ENCODE measurements at regions of chr15 and their contacts with region 1.

Region 1: DNA sequence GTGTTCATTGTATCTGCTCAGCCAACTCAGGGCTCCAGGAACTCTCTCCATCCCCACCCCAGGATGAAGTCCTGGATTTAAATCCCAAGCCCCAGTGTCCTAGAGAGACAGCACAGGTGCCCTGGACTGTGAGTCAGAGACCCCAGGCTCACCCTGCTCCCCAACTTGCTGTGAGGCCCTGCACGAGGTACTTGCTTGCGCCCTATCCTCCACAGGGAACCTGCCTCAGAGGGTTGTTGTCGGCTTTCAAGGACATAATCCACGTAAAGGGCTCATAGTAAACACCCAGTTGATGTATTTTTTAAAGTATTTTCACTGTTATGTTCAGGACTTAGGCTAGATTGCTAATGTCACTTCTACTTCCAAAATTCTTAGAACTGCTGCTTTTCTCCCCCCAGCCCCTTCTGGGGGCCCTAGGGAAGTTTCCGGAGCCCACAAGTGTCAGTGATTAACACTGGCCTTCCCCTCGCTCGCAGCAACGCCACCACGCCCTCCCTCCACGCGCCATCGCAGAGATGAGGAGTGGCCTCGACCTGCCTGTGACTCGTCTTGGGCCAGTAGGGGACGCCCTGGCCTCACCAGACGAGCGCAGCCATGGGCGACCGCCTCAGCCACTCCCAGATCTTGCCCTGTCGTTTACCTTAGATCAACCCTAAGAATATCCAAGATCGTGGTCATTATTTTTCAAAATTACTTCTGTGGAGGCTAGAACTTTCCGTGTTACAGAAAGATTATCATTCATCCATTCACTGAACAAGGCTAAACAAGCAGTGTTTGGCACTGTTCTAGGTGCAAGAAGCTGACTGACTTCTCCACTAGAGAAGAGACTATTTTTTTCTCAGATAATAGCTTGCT is 6.0 kb upstream of the SRP14 start:
- DNase-seq: peak; percentile 96
- H3K4me3 Mint-ChIP-seq: peak overlapping the region; percentile 45
- H3K27ac Mint-ChIP-seq: peak overlapping the region; percentile 50
- H3K4me1 Mint-ChIP-seq: peaks cover 70% of the 10 kb centered on the region
- H3K27me3 Mint-ChIP-seq: no peaks in the 10 kb centered on the region

Region 2: DNA sequence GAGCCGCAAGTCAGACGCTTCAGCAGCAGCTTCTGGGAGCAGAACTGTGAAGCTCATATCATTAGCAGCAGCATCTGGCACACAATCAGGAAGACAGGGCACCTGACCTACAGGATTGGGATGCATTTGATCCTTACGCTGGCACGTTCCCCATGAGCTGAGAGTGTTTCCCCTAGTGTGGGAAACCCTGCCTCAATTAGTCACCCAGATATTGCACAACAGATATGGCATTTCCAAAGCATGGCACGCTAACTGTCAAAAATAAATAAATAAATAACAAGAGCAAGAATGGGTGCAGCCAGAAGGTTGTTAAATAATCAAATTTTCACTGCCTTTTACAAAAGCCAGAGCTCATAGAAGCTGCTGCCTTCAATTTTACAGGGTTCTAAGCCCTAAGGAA is 653.7 kb before region 1 on chr15:
- CTCF ChIA-PET with region 1: no interaction called
- intact Hi-C with region 1: no loop called
- DNase-seq: no peak
- H3K4me3 Mint-ChIP-seq: no peak overlapping the region
- H3K27ac Mint-ChIP-seq: no peak overlapping the region
- H3K4me1 Mint-ChIP-seq: no peaks in the 10 kb centered on the region
- H3K27me3 Mint-ChIP-seq: peaks cover 8% of the 10 kb centered on the region

Region 3: GRCh38 chr15:40064221-40064894 is 19.4 kb after region 1 on chr15:
- CTCF ChIA-PET with region 1: interaction called, 4 read pairs
- intact Hi-C with region 1: loop called (anchors 1 kb)
- DNase-seq: peak; percentile 58
- H3K4me3 Mint-ChIP-seq: no peak overlapping the region
- H3K27ac Mint-ChIP-seq: peak overlapping the region; percentile 64
- H3K4me1 Mint-ChIP-seq: peaks cover 17% of the 10 kb centered on the region
- H3K27me3 Mint-ChIP-seq: no peaks in the 10 kb centered on the region

Region 4: DNA sequence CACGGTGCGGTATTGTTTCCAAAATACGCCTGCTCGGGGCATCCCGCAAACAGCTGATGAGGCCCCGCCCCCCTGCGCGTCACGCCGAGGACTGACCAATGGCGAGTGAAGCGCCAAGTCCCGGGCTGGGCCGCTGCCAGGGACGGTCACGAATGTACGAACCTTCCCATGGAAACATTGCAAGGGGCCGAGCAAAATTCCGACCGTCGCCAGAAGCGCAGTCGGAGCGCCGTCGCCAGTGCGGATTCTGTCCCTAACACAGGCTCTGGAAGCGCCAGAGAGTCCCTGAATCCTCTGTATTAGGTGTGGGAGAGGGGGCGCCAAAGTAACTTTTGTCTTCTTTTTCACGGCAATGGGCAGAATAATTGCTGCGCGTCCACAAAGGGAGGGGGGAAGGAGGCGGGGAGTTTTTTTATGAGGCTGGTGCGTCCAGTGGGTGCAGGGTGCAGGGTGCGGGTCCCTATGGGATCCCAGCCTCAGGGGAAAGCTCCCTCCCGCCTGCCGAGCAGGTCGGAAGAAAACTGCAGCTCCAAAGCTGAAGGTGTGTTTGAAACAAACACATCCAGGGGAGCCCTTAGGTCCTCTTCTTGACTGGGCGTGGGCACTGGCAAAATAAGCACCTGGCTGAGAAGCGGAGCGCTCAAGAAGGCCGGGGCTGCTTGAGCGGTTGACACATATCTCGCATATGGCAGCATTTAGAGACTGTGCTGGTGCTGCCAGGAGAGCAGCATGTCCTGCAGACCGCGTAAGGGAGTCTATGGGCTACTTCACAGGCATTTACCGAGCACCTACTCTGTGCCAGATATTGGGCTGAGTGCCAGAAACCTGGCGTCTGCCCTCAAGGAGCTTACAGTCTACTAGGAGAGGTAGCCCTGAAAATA is 64.2 kb after region 1 on chr15 and contains the start of gene BMF:
- CTCF ChIA-PET with region 1: interaction called, 181 read pairs
- intact Hi-C with region 1: loop called (anchors 1 kb)
- DNase-seq: peak; percentile 98
- H3K4me3 Mint-ChIP-seq: peak within 1 kb of the TSS; percentile 84
- H3K27ac Mint-ChIP-seq: peak within 1 kb of the TSS; percentile 31
- H3K4me1 Mint-ChIP-seq: peaks cover 40% of the 10 kb centered on the region
- H3K27me3 Mint-ChIP-seq: no peaks in the 10 kb centered on the region
- total RNA-seq, gene BMF: 9.4 to 10.3 TPM

Region 5: DNA sequence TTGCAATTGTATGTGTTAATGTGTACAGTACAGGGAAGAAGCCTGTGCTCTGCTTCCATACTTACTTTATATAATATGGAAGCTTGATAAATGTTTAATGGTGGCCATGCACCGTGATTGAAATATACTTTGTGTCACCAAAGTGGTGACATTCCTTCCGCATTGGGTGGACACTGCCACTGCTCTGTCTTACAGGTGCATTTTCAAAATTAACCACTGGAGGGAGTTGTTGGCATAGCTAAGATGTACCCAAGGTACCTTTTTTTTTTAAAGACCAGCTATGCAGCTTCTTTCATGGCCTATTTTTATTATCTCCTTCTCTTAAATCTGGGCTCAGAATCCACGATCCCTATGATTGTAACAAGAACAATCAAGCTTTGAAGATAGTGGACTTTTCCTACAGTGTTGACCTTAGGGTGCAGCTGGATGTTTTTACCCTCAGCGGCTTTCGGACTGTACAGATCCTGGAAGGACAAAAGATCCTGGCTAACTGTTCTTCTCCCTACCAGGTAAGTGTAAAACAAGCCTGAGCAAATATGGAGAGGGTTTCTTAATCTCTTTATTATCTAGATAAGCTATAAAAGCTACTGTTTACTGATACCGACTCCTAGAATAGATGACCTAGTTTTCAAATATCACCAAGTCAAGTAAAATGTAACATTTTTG is 172.3 kb after region 1 on chr15:
- CTCF ChIA-PET with region 1: interaction called, 23 read pairs
- intact Hi-C with region 1: loop called (anchors 1 kb)
- DNase-seq: peak; percentile 47
- H3K4me3 Mint-ChIP-seq: no peak overlapping the region
- H3K27ac Mint-ChIP-seq: no peak overlapping the region
- H3K4me1 Mint-ChIP-seq: no peaks in the 10 kb centered on the region
- H3K27me3 Mint-ChIP-seq: no peaks in the 10 kb centered on the region

Region 6: DNA sequence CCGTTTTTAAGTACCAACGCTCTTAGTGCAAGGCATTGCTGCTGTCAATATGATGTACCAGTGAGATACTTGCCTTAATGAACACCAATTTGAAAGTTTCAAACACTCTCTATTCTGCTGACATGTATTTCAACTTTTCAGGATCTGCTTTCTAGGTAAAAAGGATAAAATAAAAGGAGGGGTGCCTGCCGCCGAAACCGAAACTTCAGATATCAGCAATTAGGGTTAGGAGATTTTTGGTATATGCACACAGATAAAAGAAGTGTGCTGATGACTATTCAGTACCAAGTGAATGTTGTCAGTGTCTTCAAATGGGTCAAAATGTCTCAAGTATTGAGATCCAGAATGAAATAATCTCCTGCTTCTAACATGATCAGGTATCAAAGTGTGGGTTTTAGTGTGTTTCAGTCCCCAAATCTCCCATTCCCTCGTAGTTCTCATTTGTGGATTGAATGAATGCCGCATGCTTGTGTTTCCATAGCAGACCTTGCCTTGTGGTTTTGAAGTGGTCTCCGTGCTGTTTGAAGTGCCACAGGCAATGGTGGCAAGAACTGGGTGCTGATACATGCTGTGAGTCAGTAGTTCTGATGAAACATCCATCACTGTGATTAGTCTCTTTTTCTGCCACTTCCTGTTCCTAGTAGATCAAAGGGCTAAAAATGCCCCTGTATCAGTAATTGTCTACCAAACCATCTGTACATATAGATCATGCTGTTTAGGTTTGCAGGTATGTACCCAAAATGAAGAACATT is 448.3 kb after region 1 on chr15:
- CTCF ChIA-PET with region 1: no interaction called
- intact Hi-C with region 1: loop called (anchors 1 kb)
- DNase-seq: peak; percentile 83
- H3K4me3 Mint-ChIP-seq: peak overlapping the region; percentile 4
- H3K27ac Mint-ChIP-seq: peak overlapping the region; percentile 14
- H3K4me1 Mint-ChIP-seq: peaks cover 28% of the 10 kb centered on the region
- H3K27me3 Mint-ChIP-seq: peaks cover under 1% of the 10 kb centered on the region